Posterior cingulate gyrus (tissue), 11 donors: ENCODE measurements at regions of chr11 and their contacts with region 1.

Region 1: GRCh38 chr11:125874556-125875124 is 12.8 kb upstream of the HYLS1 start:
- DNase-seq: peak in 8 of 10 donors; percentile 40 to 92 (median 69)

Region 2: GRCh38 chr11:125625630-125626287 is 248.9 kb before region 1 on chr11:
- intact Hi-C with region 1: loop called (anchors 5 kb)
- DNase-seq: peak; percentile 84 to 98 (median 90)